Dendritic cell treated with granulocyte-macrophage colony-stimulating factor and Interleukin-4, amounts not matched to agents 40 ng/mL and 50 ng/mL, for 4 days (primary cell): ENCODE measurements at regions of chr18 and their contacts with region 1.

Region 1: GRCh38 chr18:44765456-44765855 is 84.8 kb downstream of the SETBP1 start:
- H3K4me3 Mint-ChIP-seq: no peak overlapping the region
- H3K27ac Mint-ChIP-seq: no peak overlapping the region
- H3K4me1 Mint-ChIP-seq: peaks cover 40% of the 10 kb centered on the region
- H3K27me3 Mint-ChIP-seq: peaks cover 56% of the 10 kb centered on the region

Region 2: DNA sequence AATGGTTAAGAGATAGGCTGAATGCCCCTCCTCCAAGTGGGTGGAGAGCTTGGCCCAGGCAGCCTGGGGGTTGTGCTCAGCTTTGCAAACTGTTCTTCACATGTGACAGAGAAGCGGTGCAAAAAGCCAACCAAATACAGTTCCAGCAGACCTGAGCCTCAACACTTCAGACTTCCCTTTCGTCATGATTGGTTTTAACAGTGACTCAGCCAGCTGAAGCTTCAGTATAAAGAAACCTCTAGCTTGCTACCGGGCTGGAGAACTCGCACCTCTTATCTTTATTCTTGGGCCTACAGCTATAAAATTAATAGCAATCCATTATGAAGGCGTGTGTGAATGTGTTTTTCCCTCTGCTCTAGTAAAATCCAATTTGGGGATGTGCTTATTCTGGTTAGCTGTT is 64.8 kb before region 1 on chr18:
- intact Hi-C with region 1: no loop called
- H3K4me3 Mint-ChIP-seq: no peak overlapping the region
- H3K27ac Mint-ChIP-seq: no peak overlapping the region
- H3K4me1 Mint-ChIP-seq: peaks cover 8% of the 10 kb centered on the region
- H3K27me3 Mint-ChIP-seq: peaks cover 74% of the 10 kb centered on the region

Region 3: GRCh38 chr18:44725300-44726096 is 40.0 kb before region 1 on chr18:
- intact Hi-C with region 1: loop called (anchors 5 kb)
- H3K4me3 Mint-ChIP-seq: no peak overlapping the region
- H3K27ac Mint-ChIP-seq: no peak overlapping the region
- H3K4me1 Mint-ChIP-seq: peaks cover 50% of the 10 kb centered on the region
- H3K27me3 Mint-ChIP-seq: peaks cover 81% of the 10 kb centered on the region

Region 4: GRCh38 chr18:44747157-44747556 is 18.3 kb before region 1 on chr18:
- intact Hi-C with region 1: no loop called
- H3K4me3 Mint-ChIP-seq: no peak overlapping the region
- H3K27ac Mint-ChIP-seq: no peak overlapping the region
- H3K4me1 Mint-ChIP-seq: peaks cover 16% of the 10 kb centered on the region
- H3K27me3 Mint-ChIP-seq: peaks cover 94% of the 10 kb centered on the region